Esophagus muscularis mucosa (tissue), 4 donors: ENCODE measurements at regions of chr1 and their contacts with region 1.

Region 1: DNA sequence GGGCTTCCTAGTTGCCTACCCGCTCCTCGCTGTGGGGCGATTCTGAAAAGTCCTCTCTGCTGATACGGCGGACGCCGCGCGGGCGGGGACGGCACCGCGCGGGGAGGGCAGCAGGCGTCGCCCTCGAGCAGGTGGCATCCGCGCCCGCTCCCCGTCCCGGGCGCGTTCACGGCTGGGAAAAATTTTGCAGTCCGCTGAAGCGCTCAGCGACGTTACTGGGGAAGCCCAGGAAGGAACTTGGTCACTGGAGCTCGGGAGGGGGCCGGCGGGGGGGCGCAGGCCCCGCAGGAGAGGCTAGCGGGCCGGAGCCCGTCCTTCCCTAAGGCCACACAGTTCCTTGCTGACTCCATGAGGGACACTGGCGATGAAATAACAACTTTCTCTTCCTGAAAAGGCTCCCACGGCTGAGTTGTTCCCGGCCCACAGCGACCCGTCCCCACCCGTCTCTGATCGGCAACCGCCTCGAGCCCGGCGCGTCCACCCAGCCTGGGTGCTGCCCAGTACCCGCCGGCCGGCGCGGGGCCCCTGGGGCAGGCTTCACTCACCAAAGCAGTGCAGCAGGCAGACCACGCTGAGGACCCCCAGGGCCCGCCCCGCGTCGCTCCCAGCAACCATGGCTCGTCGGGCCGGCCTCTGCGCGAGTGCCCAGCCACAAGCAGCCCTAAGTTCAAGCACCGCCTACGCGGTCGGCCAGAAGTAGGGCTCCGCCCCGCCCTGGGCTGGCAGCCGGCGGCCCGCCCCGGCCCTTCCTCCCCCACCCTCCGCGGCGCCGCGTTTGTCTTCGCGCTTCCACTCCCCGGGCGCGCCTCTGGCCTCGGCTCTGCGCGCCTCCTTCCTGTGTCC is at the start of gene CD58:
- DNase-seq: peak; percentile 97
- H3K4me3 ChIP-seq: peak within 1 kb of the TSS; percentile 80 to 95 (median 88)
- H3K27ac ChIP-seq: peak within 1 kb of the TSS; percentile 97 to 99 (median 98)
- H3K4me1 ChIP-seq: peaks cover 19 to 43% (median 30%) of the 10 kb centered on the region in 4 donors
- H3K27me3 ChIP-seq: no peaks in the 10 kb centered on the region
- CTCF ChIP-seq: peak; percentile 58 to 81 (median 64)
- EP300 ChIP-seq: no peak
- POLR2A ChIP-seq: peak; percentile 50
- total RNA-seq, gene CD58: 20.3 to 23.4 (median 21.7) TPM

Region 2: GRCh38 chr1:116654355-116654754 is 83.8 kb after region 1 on chr1:
- intact Hi-C with region 1: no loop called
- DNase-seq: no peak
- H3K4me3 ChIP-seq: no peak overlapping the region
- H3K27ac ChIP-seq: peak overlapping the region in 1 of 4 donors; percentile 53
- H3K4me1 ChIP-seq: no peaks in the 10 kb centered on the region
- H3K27me3 ChIP-seq: no peaks in the 10 kb centered on the region
- CTCF ChIP-seq: no peak
- EP300 ChIP-seq: no peak
- POLR2A ChIP-seq: no peak

Region 3: DNA sequence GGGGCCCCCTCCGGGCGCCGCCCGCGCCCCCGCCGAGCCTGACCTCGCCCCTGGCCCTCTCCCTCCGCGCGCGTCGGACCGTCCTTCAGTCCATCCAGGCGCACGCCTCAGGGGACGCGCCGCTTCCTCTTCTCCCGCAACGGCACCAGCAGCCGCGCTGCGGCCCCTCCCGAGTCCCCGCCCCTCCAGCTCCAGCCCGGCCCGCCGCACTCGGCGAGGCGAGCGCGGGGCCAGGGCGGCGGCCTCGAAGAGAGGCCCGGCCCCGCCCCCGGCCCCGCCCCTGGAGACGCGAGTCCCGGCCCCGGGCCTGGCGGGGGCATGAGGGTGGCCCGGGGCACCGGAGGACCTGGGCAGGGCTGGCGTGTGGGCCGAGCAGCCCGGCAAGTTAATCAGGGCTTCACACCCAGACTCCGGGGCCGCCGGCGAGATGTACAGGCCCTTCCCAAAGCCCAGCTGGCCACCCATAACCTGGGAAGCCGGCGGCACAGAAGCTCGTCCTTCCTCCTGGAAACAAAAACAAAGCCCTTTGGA is 97.1 kb after region 1 on chr1 and contains the start of gene IGSF3:
- intact Hi-C with region 1: loop called (anchors 5 kb)
- DNase-seq: no peak
- H3K4me3 ChIP-seq: peak within 1 kb of the TSS; percentile 68 to 80 (median 79)
- H3K27ac ChIP-seq: peak within 1 kb of the TSS; percentile 42 to 56 (median 48)
- H3K4me1 ChIP-seq: peaks cover 11 to 32% (median 22%) of the 10 kb centered on the region in 4 donors
- H3K27me3 ChIP-seq: peaks cover 0 to 4% (median 0%) of the 10 kb centered on the region in 4 donors
- CTCF ChIP-seq: no peak
- EP300 ChIP-seq: no peak
- POLR2A ChIP-seq: no peak
- total RNA-seq, gene IGSF3: 2.5 to 14.3 (median 8.5) TPM